A549 (cell line): ENCODE measurements at regions of chr1 and their contacts with region 1.

Region 1: GRCh38 chr1:109532365-109533136 is 7.1 kb upstream of the GPR61 start:
- DNase-seq: peak; percentile 58 to 64
- ATAC-seq: peak; percentile 83 to 94
- H3K4me3 ChIP-seq: no peak overlapping the region
- H3K27ac ChIP-seq: peak overlapping the region; percentile 67 to 84
- H3K4me1 ChIP-seq: peaks cover 4% of the 10 kb centered on the region; the same call in 2 of the 3 replicates
- CTCF ChIP-seq: peak; percentile 55
- EP300 ChIP-seq: no peak
- POLR2A ChIP-seq: no peak
- RAD21 ChIP-seq: peak; percentile 71 to 81

Region 2: DNA sequence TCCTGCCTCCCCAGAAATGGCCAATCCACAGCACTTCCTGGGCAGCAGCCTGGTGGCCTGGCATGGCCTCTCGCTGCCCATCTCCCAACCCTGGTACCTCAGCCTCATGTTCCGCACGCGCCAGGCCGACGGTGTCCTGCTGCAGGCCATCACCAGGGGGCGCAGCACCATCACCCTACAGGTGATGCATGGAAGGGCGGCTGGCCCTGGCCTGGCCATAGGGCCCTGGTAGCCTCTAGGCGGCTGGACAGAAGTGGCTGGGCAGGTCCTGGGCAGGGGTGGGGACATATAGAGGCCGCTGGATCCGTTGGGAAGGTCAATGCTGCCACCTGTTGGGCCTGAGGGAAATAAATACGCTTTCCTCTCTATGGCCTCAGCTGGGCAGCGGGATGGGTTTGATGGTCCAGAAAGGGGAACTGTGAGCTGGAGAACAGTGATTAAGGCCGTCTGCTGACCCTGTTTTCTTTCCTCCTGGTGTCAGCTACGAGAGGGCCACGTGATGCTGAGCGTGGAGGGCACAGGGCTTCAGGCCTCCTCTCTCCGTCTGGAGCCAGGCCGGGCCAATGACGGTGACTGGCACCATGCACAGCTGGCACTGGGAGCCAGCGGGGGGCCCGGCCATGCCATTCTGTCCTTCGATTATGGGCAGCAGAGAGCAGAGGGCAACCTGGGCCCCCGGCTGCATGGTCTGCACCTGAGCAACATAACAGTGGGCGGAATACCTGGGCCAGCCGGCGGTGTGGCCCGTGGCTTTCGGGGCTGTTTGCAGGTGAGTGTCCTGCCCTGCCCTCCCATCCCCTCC is 268.8 kb before region 1 on chr1:
- CTCF ChIA-PET with region 1: interaction called, 12 read pairs
- POLR2A ChIA-PET with region 1: no interaction called
- DNase-seq: peak; percentile 85 to 95
- ATAC-seq: peak; percentile 92 to 99
- H3K4me3 ChIP-seq: no peak overlapping the region
- H3K27ac ChIP-seq: peak overlapping the region in 1 of 2 experiments; percentile 57; a peak in 2 of 6 replicates
- H3K4me1 ChIP-seq: no peaks in the 10 kb centered on the region; the same call in 2 of the 3 replicates
- CTCF ChIP-seq: peak; percentile 89
- EP300 ChIP-seq: no peak
- POLR2A ChIP-seq: no peak
- RAD21 ChIP-seq: peak; percentile 89 to 94

Region 3: GRCh38 chr1:109295712-109296415 is 236.7 kb before region 1 on chr1:
- CTCF ChIA-PET with region 1: no interaction called
- POLR2A ChIA-PET with region 1: no interaction called
- DNase-seq: no peak
- ATAC-seq: no peak
- H3K4me3 ChIP-seq: no peak overlapping the region
- H3K27ac ChIP-seq: no peak overlapping the region
- H3K4me1 ChIP-seq: peaks cover 3% of the 10 kb centered on the region; the same call in 1 of the 3 replicates
- CTCF ChIP-seq: no peak
- EP300 ChIP-seq: no peak
- POLR2A ChIP-seq: no peak
- RAD21 ChIP-seq: no peak

Region 4: DNA sequence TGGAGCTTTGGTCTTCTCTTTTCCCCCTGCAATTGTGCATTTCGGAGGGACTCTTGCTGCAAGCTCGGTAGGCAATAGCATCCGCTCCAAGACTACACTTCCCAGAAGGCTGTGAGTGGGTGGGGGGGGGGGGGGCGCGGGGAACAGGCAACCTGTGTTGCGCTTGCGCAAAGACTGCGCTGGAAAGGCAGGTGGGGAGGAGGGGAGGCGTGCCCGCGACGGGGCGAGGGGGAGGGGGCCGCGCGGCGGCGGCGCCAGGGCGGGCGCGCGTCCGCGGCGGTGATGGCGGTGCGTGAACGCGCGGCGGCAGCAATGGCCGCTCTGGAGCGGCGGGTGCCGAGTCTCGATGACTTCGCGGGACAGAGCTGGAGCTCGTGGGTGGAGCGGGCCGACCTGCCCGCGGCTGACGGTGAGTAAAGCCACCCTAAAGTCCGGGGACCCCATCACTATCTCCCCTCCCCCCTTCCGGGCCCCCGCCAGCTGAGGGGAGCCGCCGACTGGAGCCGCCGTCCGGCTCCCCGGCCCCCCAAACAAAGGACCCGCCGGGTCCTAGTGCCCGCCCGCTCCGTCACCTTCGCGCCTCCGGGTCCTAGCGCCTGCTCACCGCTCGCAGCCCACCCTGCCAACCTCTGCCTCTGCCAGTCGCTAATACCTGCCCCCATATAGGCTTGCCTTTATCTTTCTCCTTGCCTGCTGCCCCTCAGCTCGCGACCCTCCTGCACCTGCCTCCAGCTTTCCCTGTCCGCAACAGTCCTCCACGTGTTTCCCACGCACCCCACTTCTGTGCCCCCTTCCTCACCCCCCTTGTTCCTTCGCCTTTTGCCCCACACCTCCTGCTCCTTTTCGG is 48.7 kb before region 1 on chr1 and contains the start of gene ATXN7L2:
- CTCF ChIA-PET with region 1: interaction called, 749 read pairs
- POLR2A ChIA-PET with region 1: interaction called, 3 read pairs
- DNase-seq: peak; percentile 85 to 92
- ATAC-seq: peak; percentile 80 to 82
- H3K4me3 ChIP-seq: peak within 1 kb of the TSS; percentile 60
- H3K27ac ChIP-seq: peak within 1 kb of the TSS; percentile 96 to 99
- H3K4me1 ChIP-seq: peaks cover 6% of the 10 kb centered on the region; the same call in 2 of the 3 replicates
- CTCF ChIP-seq: no peak
- EP300 ChIP-seq: no peak
- POLR2A ChIP-seq: peak; percentile 92
- RAD21 ChIP-seq: no peak
- polyA plus RNA-seq, gene ATXN7L2: 0.97 and 1.2 TPM in 2 replicates

Region 5: DNA sequence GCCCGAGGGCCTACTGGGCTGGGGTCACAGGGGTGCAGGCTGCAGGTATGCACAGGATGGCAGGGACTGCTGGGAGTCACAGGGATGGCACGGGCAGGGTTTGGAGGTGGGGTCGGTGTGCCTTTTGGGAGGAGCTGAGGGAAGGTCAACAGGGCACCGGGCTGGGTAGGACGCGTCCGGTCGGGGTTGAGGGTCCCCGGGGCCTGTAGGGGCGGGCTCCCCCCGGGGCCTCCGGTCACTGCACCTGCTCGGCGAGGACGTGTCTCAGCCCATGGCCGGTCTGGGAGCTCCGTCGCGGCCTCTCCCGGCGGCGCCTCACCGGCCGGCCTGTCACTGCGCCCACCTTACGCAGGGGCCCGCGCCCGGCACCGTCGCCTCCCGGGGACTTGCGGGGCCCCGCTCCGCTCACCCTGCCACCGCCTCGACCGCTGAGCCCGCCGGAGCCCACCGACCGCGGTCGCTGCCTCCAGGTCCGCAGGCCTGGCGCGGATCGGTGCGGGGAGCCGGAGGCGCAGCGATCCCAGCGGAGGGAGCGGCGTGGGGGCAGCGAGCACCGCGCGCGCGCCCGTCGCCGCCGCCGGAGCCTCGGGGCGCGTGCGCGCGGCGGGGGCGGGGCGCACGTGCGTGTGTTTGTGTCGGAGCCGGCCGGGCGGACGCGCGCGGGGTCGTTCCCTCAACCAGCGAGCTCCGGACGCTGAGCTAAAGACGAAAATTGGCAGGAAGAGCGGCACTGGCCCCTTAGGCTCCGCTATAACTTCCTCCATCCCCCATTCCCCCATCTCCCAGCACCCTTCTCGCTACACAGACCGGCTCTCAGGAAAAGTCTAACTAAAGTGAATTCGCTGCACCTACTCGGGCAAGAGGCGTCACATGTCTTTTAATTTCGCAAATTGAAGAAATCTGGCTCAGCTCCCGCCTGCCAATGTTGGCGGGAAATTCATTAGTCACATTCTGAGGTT is 23.1 kb before region 1 on chr1 and contains the start of gene AMIGO1:
- CTCF ChIA-PET with region 1: interaction called, 232 read pairs
- POLR2A ChIA-PET with region 1: no interaction called
- DNase-seq: peak; percentile 9 to 35
- ATAC-seq: peak; percentile 67
- H3K4me3 ChIP-seq: peak within 1 kb of the TSS; percentile 63
- H3K27ac ChIP-seq: peak within 1 kb of the TSS; percentile 68 to 93
- H3K4me1 ChIP-seq: peaks cover 4% of the 10 kb centered on the region; the same call in 1 of the 3 replicates
- CTCF ChIP-seq: no peak
- EP300 ChIP-seq: no peak
- POLR2A ChIP-seq: no peak
- RAD21 ChIP-seq: no peak
- polyA plus RNA-seq, gene AMIGO1: 0.43 and 0.85 TPM in 2 replicates

Region 6: DNA sequence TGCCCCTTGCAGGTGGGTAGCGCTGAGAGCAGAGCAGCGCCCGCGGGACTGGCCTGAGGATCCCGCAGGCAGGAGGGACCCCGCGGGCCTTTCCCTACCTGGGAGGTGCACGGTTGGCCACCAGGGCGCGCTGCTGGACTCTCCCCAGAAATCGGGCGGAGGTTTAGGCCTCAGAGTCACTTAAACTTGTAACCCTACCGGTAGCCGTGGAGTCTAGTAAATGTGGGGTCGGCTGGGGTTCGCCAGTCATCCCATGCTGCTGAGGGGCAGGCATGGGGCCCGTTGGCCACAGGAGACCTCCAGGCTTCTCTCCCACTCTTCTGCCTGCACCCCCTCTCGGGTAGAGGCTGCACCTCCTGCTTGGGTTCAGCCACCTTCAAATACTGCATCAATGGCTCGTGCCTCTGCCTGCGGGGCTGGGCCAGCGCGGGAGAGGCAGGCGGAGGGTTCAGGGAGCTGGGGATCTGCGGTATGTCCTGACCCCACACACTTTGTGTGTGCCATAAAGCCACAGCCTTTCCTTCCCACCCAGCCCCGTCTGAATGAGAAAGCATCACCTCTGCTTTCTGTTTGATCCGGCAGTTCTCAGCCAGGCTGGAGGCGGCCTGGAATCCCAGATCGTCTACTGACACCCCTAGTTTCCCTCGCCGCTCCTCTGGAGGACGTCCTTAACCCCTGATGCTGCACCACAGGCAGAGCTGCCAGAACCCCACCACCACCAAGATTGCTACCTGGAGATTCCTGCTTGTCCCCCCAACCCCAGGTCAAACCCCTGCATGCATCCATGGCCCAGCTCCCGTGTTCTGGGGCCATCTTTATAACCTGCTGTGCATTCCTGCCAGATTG is 111.1 kb after region 1 on chr1:
- CTCF ChIA-PET with region 1: interaction called, 29 read pairs
- POLR2A ChIA-PET with region 1: no interaction called
- DNase-seq: peak; percentile 59 to 75
- ATAC-seq: peak; percentile 96 to 98
- H3K4me3 ChIP-seq: no peak overlapping the region
- H3K27ac ChIP-seq: peak overlapping the region; percentile 73 to 80
- H3K4me1 ChIP-seq: peaks cover 9% of the 10 kb centered on the region; the same call in 2 of the 3 replicates
- CTCF ChIP-seq: peak; percentile 76
- EP300 ChIP-seq: no peak
- POLR2A ChIP-seq: no peak
- RAD21 ChIP-seq: peak; percentile 67 to 74